HepG2 (cell line): ENCODE measurements at regions of chr16 and their contacts with region 1.

Region 1: GRCh38 chr16:70646260-70647241 is at the start of gene IL34:
- DNase-seq: no peak
- ATAC-seq: peak; percentile 40
- H3K4me3 ChIP-seq: peak within 1 kb of the TSS in 1 of 3 experiments; percentile 52; a peak in 1 of 6 replicates
- H3K27ac ChIP-seq: no peak within 1 kb of the TSS
- H3K4me1 ChIP-seq: peaks cover 6% of the 10 kb centered on the region; the same call in 1 of the 2 replicates
- H3K27me3 ChIP-seq: peaks cover 10 to 58% of the 10 kb centered on the region in 2 experiments; a peak in 4 of 5 replicates
- CTCF ChIP-seq: no peak; the same call in 1 of the 2 replicates
- EP300 ChIP-seq: no peak
- POLR2A ChIP-seq: no peak
- RAD21 ChIP-seq: no peak
- total RNA-seq, gene IL34: 1.2 and 1.4 TPM in 2 replicates

Region 2: GRCh38 chr16:70576431-70577255 is 69.9 kb before region 1 on chr16:
- CTCF ChIA-PET with region 1: no interaction called
- POLR2A ChIA-PET with region 1: no interaction called
- in situ Hi-C with region 1: no loop called
- intact Hi-C with region 1: loop called (anchors 5 kb)
- DNase-seq: peak; percentile 28
- ATAC-seq: peak; percentile 6
- H3K4me3 ChIP-seq: no peak overlapping the region
- H3K27ac ChIP-seq: no peak overlapping the region
- H3K4me1 ChIP-seq: peaks cover 13% of the 10 kb centered on the region
- H3K27me3 ChIP-seq: peaks cover 0 to 3% of the 10 kb centered on the region in 2 experiments; a peak in 2 of 5 replicates
- CTCF ChIP-seq: no peak
- EP300 ChIP-seq: no peak
- POLR2A ChIP-seq: peak in 1 of 2 experiments; percentile 11; a peak in 2 of 4 replicates
- RAD21 ChIP-seq: no peak

Region 3: GRCh38 chr16:70685938-70686375 is 39.4 kb after region 1 on chr16 and contains the start of gene MTSS2:
- CTCF ChIA-PET with region 1: no interaction called
- POLR2A ChIA-PET with region 1: no interaction called
- in situ Hi-C with region 1: no loop called
- intact Hi-C with region 1: no loop called
- DNase-seq: peak; percentile 80
- ATAC-seq: peak; percentile 16
- H3K4me3 ChIP-seq: peak within 1 kb of the TSS; percentile 86 to 93 (median 91)
- H3K27ac ChIP-seq: peak within 1 kb of the TSS; percentile 91
- H3K4me1 ChIP-seq: peaks cover 80% of the 10 kb centered on the region
- H3K27me3 ChIP-seq: no peaks in the 10 kb centered on the region; a peak in 1 of 5 replicates
- CTCF ChIP-seq: no peak
- EP300 ChIP-seq: peak in 1 of 2 experiments; percentile 54; a peak in 2 of 4 replicates
- POLR2A ChIP-seq: peak in 1 of 2 experiments; percentile 18; a peak in 1 of 4 replicates
- RAD21 ChIP-seq: peak; percentile 67
- total RNA-seq, gene MTSS2: 84.6 and 132 TPM in 2 replicates

Region 4: DNA sequence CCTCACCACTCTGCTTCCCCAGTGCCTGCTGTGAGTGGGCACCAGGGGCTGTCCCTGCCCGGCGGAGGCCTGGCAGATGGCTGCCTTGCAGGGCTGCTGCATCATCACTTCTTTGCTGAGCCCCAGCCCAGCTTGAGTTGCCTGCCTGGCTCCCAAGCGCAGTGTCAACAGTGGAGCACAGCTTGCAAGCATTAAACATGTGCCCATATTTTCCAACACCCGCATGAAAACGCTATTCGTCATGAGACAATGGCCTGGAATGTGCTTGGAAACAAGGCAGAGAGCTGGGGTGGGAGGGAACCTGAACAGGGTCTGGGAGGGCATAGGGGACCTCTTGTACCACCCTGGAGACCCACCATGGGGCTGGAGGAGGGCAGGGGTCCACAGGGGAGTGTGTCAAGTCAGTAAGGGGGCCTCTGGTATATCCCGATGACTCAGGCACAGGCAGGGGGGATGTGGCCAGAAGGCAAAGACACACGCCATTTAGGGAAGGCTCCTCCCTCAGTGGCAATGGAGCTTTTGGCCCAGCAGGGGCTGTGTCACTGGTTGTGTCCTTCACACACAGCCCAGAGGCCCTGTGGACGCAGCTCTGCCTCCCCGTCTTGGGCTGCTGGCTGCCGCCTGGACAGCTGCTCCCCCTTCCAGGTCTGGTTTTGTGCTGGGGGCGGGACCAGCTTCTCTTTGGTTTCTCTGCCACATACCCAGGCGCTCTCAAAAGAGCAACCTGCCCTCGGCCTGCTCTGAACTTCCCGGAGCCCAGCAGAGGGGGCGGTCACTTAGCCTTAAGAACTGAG is 56.7 kb after region 1 on chr16:
- CTCF ChIA-PET with region 1: no interaction called
- POLR2A ChIA-PET with region 1: no interaction called
- in situ Hi-C with region 1: no loop called
- intact Hi-C with region 1: no loop called
- DNase-seq: peak; percentile 79
- ATAC-seq: peak; percentile 91
- H3K4me3 ChIP-seq: peak overlapping the region in 1 of 3 experiments; percentile 21; a peak in 1 of 6 replicates
- H3K27ac ChIP-seq: peak overlapping the region; percentile 31
- H3K4me1 ChIP-seq: peaks cover 52% of the 10 kb centered on the region
- H3K27me3 ChIP-seq: no peaks in the 10 kb centered on the region
- CTCF ChIP-seq: peak; percentile 43
- EP300 ChIP-seq: no peak
- POLR2A ChIP-seq: 0 out of 4 replicates have a peak, but pooled peaks of 1 of the 2 experiments have one; percentile 21
- RAD21 ChIP-seq: peak; percentile 84